K562 (cell line): ENCODE measurements at regions of chr20 and their contacts with region 1.

Region 1: DNA sequence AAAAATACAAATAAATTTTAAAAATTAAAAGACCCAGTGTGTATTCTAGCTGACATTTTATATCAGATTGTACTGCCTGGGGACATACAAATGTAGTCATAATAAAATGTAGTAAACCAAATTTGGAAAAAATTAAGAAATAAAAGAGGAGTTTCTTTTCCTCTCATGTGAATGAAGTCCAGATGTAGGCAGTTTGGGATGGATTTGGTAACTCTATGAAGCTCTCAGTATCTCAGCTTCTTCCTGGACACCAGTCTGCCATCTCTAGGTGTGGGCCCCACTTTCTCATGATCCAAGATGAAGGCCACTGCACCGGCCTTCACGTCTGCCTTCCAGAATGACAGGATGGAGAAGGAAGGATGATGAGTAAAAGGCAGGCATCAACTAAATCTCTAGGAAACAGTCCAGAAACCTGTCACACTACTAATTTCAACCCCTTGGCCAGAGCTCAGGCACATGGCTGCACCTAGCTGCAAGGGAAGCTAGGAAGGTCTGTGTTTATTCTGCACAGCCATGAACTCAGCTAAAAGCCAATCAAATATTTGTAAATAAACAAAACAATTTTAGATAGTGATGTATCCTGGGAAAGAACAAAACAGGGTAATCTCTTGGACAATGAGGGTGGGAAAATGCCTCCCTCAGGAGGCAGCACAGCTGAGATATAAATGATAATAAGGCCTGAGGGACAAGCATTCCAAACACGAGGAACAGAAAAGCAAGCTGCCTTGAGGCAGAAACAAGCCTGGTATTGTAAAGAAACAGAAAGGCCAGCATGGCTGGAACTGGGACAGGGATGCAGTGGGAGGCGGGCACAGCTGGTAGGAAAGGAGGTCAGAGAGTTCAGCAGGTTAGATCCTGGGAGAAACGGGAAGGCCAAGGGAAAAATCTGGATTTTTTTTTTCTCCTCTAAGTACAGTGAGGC is 88.6 kb upstream of the PTPN1 start:
- DNase-seq: no peak
- ATAC-seq: no peak
- H3K4me3 ChIP-seq: no peak overlapping the region
- H3K27ac ChIP-seq: no peak overlapping the region
- H3K4me1 ChIP-seq: peaks cover 10 to 23% of the 10 kb centered on the region in 2 experiments
- H3K27me3 ChIP-seq: peaks cover 2 to 13% of the 10 kb centered on the region in 2 experiments; a peak in 3 of 5 replicates
- CTCF ChIP-seq: no peak
- EP300 ChIP-seq: no peak
- POLR2A ChIP-seq: no peak
- RAD21 ChIP-seq: no peak

Region 2: GRCh38 chr20:50434653-50435396 is 13.2 kb after region 1 on chr20:
- CTCF ChIA-PET with region 1: no interaction called
- POLR2A ChIA-PET with region 1: interaction called, 11 read pairs
- in situ Hi-C with region 1: no loop called
- intact Hi-C with region 1: no loop called
- DNase-seq: no peak
- ATAC-seq: no peak
- H3K4me3 ChIP-seq: no peak overlapping the region
- H3K27ac ChIP-seq: no peak overlapping the region
- H3K4me1 ChIP-seq: peaks cover 30 to 34% of the 10 kb centered on the region in 2 experiments
- H3K27me3 ChIP-seq: no peaks in the 10 kb centered on the region
- CTCF ChIP-seq: no peak
- EP300 ChIP-seq: no peak
- POLR2A ChIP-seq: no peak
- RAD21 ChIP-seq: no peak

Region 3: DNA sequence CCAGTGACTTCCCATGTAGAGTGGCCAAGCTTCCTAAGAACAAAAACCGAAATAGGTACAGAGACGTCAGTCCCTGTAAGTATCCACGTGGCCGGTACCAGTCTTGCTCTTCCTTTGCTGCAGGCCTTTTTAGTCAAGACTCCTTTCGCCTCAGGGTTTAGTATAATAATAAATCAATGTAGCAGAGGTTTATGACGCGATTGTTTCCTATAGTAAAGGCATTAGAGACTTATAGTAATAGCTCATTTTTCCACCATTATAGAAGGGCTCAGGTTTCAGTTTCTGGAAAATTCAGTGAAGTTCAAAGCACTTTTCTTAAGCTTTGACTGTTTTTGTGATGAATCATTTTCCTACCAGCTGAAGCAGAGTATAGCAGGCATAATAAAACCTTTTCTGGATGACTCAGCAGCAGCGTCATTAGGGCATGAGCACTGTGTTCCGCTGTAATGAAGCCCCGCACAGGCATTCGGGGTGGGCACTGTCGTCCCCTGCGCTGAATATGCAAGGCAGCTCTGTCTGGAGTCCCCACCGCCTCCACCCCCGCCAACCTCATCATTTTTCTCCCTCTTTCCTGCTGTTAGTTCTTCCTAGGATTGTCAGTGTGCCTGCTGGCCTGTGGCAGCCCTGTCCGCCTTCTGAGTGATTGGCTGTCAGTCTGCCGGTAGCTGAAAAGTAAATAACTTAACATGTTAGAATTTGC is 139.9 kb after region 1 on chr20:
- CTCF ChIA-PET with region 1: no interaction called
- POLR2A ChIA-PET with region 1: no interaction called
- in situ Hi-C with region 1: no loop called
- intact Hi-C with region 1: no loop called
- DNase-seq: no peak
- ATAC-seq: no peak
- H3K4me3 ChIP-seq: no peak overlapping the region
- H3K27ac ChIP-seq: no peak overlapping the region; the same call in 2 of the 3 replicates
- H3K4me1 ChIP-seq: peaks cover 4 to 7% of the 10 kb centered on the region in 2 experiments; a peak in 4 of 5 replicates
- H3K27me3 ChIP-seq: no peaks in the 10 kb centered on the region
- CTCF ChIP-seq: no peak
- EP300 ChIP-seq: no peak
- POLR2A ChIP-seq: no peak
- RAD21 ChIP-seq: no peak

Region 4: DNA sequence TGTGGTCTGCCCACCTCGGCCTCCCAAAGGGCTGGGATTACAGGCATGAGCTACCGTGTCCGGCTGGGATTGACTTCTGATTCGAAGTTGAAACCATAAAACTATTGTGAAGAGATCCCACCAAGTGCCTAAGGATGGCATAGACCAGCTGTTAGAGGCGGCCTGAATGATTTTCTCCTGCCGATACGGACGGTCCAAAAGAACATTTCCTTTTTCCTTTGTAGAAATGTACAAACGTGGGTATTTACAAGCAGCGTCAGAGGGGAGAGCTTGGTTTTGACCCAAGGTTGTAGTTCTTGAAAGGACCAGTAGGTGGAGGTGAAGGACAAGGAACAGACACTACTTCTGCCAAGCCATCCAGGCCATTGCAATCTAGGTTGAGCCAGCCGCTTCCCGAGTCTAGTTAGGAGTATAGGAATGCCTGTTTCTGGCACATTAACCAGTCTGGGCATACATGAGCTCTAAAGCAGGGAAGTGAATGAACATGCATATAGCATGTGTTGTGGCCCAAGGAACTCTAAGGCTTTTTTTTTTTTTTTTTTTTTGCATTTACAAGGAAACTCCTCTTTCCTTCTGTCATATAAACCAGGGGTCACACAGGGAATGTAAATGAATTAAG is 566.1 kb after region 1 on chr20:
- CTCF ChIA-PET with region 1: no interaction called
- POLR2A ChIA-PET with region 1: no interaction called
- in situ Hi-C with region 1: no loop called
- intact Hi-C with region 1: no loop called
- DNase-seq: peak; percentile 71 to 85 (median 76)
- ATAC-seq: peak; percentile 97
- H3K4me3 ChIP-seq: no peak overlapping the region
- H3K27ac ChIP-seq: no peak overlapping the region
- H3K4me1 ChIP-seq: 0 out of 5 replicates have a peak, but pooled peaks cover 0 to 2% of the 10 kb centered on the region in 2 experiments
- H3K27me3 ChIP-seq: peaks cover 15 to 28% of the 10 kb centered on the region in 2 experiments; a peak in 4 of 5 replicates
- CTCF ChIP-seq: peak; percentile 80 to 95 (median 90)
- EP300 ChIP-seq: no peak
- POLR2A ChIP-seq: no peak
- RAD21 ChIP-seq: peak; percentile 86 to 93